Activated B cell treated with CpG ODN at 0.5 μM for 24 hours (primary cell): ENCODE measurements at regions of chr11 and their contacts with region 1.

Region 1: GRCh38 chr11:6377902-6378639 is 12.2 kb upstream of the SMPD1 start:
- DNase-seq: no peak
- ATAC-seq: peak; percentile 56
- H3K4me3 Mint-ChIP-seq: peak overlapping the region; percentile 42
- H3K27ac Mint-ChIP-seq: peak overlapping the region; percentile 81
- H3K4me1 Mint-ChIP-seq: peaks cover 20% of the 10 kb centered on the region
- H3K27me3 Mint-ChIP-seq: no peaks in the 10 kb centered on the region
- CTCF ChIP-seq: no peak

Region 2: DNA sequence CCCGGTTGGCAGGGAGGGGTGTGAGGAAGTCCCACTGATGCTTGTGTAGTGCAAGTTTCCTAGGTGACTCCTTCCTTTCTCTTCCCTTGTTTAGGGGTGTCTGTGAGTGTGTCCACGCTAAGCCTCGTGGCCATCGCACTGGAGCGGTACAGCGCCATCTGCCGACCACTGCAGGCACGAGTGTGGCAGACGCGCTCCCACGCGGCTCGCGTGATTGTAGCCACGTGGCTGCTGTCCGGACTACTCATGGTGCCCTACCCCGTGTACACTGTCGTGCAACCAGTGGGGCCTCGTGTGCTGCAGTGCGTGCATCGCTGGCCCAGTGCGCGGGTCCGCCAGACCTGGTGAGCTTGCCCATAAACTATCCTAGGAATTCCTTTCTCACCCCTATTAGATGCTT is 108.1 kb before region 1 on chr11:
- CTCF ChIA-PET with region 1: no interaction called
- POLR2A ChIA-PET with region 1: no interaction called
- intact Hi-C with region 1: no loop called
- DNase-seq: no peak
- ATAC-seq: no peak
- H3K4me3 Mint-ChIP-seq: no peak overlapping the region
- H3K27ac Mint-ChIP-seq: no peak overlapping the region
- H3K4me1 Mint-ChIP-seq: no peaks in the 10 kb centered on the region
- H3K27me3 Mint-ChIP-seq: peaks cover 35% of the 10 kb centered on the region
- CTCF ChIP-seq: no peak

Region 3: GRCh38 chr11:6389921-6390724 is 12.1 kb after region 1 on chr11 and contains the start of gene SMPD1:
- CTCF ChIA-PET with region 1: interaction called, 11 read pairs
- POLR2A ChIA-PET with region 1: interaction called, 18 read pairs
- intact Hi-C with region 1: no loop called
- DNase-seq: peak; percentile 86
- ATAC-seq: peak; percentile 93
- H3K4me3 Mint-ChIP-seq: peak within 1 kb of the TSS; percentile 95
- H3K27ac Mint-ChIP-seq: peak within 1 kb of the TSS; percentile 99
- H3K4me1 Mint-ChIP-seq: peaks cover 36% of the 10 kb centered on the region
- H3K27me3 Mint-ChIP-seq: no peaks in the 10 kb centered on the region
- CTCF ChIP-seq: no peak
- total RNA-seq, gene SMPD1: 14.1 and 16.9 TPM in 2 replicates

Region 4: GRCh38 chr11:6443269-6444003 is 65.4 kb after region 1 on chr11:
- CTCF ChIA-PET with region 1: interaction called, 331 read pairs
- POLR2A ChIA-PET with region 1: interaction called, 21 read pairs
- intact Hi-C with region 1: loop called (anchors 1 kb)
- DNase-seq: peak; percentile 28
- ATAC-seq: peak; percentile 90
- H3K4me3 Mint-ChIP-seq: no peak overlapping the region
- H3K27ac Mint-ChIP-seq: no peak overlapping the region
- H3K4me1 Mint-ChIP-seq: no peaks in the 10 kb centered on the region
- H3K27me3 Mint-ChIP-seq: no peaks in the 10 kb centered on the region
- CTCF ChIP-seq: peak; percentile 28

Region 5: GRCh38 chr11:6497069-6497839 is 119.2 kb after region 1 on chr11 and contains the start of gene DNHD1:
- CTCF ChIA-PET with region 1: interaction called, 22 read pairs
- POLR2A ChIA-PET with region 1: interaction called, 3 read pairs
- intact Hi-C with region 1: no loop called
- DNase-seq: no peak
- ATAC-seq: no peak
- H3K4me3 Mint-ChIP-seq: peak within 1 kb of the TSS; percentile 42
- H3K27ac Mint-ChIP-seq: no peak within 1 kb of the TSS
- H3K4me1 Mint-ChIP-seq: peaks cover 3% of the 10 kb centered on the region
- H3K27me3 Mint-ChIP-seq: no peaks in the 10 kb centered on the region
- CTCF ChIP-seq: no peak
- total RNA-seq, gene DNHD1: 26.7 and 42.6 TPM in 2 replicates

Region 6: DNA sequence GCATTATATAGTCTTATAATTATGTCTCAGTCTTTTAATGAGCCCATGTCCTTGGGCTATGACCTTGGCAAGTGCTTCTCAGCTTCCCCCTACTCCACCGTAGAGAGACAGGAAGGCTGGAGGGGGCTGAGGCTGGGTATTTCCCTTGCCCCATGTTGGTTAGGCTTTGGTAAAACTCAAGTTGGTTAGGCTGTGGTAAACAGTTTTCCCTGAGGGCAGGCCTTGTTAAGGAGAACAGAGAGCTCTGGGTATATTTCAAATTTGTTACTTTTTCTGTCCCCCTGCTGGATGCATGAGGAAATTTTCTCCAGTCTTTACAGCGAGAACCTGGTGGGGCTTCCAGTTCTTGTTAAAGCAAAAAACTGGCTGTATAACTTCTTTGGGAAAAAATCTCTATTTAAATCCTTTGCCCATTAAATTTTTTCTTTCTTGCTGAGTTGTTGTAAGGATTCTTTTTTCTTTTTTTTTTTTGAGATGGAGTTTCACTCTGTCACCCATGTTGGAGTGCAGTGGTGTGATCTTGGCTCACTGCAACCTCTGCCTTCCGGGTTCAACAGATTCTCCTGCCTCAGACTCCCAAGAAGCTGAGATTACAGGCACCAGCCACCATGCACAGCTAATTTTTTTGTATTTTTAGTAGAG is 289.8 kb after region 1 on chr11:
- CTCF ChIA-PET with region 1: interaction called, 8 read pairs
- POLR2A ChIA-PET with region 1: no interaction called
- intact Hi-C with region 1: loop called (anchors 1 kb)
- DNase-seq: no peak
- ATAC-seq: peak; percentile 83
- H3K4me3 Mint-ChIP-seq: no peak overlapping the region
- H3K27ac Mint-ChIP-seq: no peak overlapping the region
- H3K4me1 Mint-ChIP-seq: peaks cover 4% of the 10 kb centered on the region
- H3K27me3 Mint-ChIP-seq: peaks cover 2% of the 10 kb centered on the region
- CTCF ChIP-seq: no peak

Region 7: GRCh38 chr11:6757373-6757967 is 379.4 kb after region 1 on chr11:
- CTCF ChIA-PET with region 1: interaction called, 15 read pairs
- POLR2A ChIA-PET with region 1: no interaction called
- intact Hi-C with region 1: no loop called
- DNase-seq: no peak
- ATAC-seq: peak; percentile 78
- H3K4me3 Mint-ChIP-seq: no peak overlapping the region
- H3K27ac Mint-ChIP-seq: no peak overlapping the region
- H3K4me1 Mint-ChIP-seq: no peaks in the 10 kb centered on the region
- H3K27me3 Mint-ChIP-seq: peaks cover 3% of the 10 kb centered on the region
- CTCF ChIP-seq: peak; percentile 41